Psoas muscle (tissue), 8 donors: ENCODE measurements at regions of chr17 and their contacts with region 1.

Region 1: DNA sequence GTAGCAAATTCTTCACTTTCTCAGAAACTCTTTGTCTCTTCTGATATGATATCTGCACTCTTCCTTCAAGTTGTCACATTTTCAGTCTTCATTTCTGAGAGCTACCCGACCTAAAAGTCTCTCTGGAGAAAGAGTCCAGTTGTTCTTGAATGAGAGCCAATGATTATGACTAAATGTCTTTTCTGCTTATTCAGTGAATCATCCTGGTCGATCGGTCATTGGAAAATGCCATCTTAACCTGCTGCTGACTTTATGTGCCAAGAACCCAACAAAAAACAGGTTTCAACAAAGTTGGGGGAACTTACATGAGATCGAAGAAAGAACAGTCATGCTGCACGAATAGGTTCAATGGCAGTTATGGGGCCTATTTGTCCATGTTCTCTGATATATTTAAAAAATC is 15.9 kb downstream of the SOX9 start:
- DNase-seq: no peak
- ATAC-seq: no peak
- H3K4me3 ChIP-seq: no peak overlapping the region
- H3K27ac ChIP-seq: no peak overlapping the region
- H3K4me1 ChIP-seq: no peaks in the 10 kb centered on the region
- H3K27me3 ChIP-seq: peaks cover 0 to 23% (median 2%) of the 10 kb centered on the region in 3 donors
- CTCF ChIP-seq: no peak

Region 2: GRCh38 chr17:72077326-72077960 is 59.2 kb before region 1 on chr17:
- intact Hi-C with region 1: loop called in 1 of 2 experiments (anchors 10 kb)
- DNase-seq: no peak
- ATAC-seq: no peak
- H3K4me3 ChIP-seq: no peak overlapping the region
- H3K27ac ChIP-seq: no peak overlapping the region
- H3K4me1 ChIP-seq: no peaks in the 10 kb centered on the region
- H3K27me3 ChIP-seq: no peaks in the 10 kb centered on the region
- CTCF ChIP-seq: no peak